Tibial artery (tissue), 4 donors: ENCODE measurements at regions of chr9 and their contacts with region 1.

Region 1: GRCh38 chr9:36337865-36338264 is 62.2 kb downstream of the RNF38 start:
- DNase-seq: no peak
- H3K4me3 ChIP-seq: no peak overlapping the region
- H3K27ac ChIP-seq: no peak overlapping the region
- H3K4me1 ChIP-seq: no peaks in the 10 kb centered on the region
- H3K27me3 ChIP-seq: no peaks in the 10 kb centered on the region
- CTCF ChIP-seq: no peak

Region 2: DNA sequence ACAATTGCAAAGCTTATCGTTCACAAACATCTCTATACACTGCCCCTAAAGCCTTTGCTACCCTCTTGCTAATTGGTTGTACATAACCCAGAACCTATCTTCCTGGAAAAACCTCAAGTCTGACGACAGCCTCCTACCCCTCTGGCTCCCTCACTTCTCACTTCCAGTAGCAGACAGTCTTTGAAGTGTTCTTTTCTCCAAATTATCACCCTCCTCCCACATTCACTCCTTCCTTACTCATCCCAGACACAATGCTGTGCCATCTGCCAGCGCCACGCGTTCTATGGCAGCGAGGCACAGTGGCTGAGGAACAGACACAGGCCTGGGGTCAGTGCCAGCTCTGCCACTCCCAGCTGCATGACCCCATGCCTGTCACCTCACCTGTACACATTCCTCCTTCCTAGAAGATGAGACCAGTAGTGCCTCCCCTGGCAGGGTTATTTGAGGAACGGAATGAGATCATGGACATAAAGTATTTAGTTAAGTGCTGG is 119.4 kb before region 1 on chr9:
- intact Hi-C with region 1: loop called (anchors 10 kb)
- DNase-seq: no peak
- H3K4me3 ChIP-seq: no peak overlapping the region
- H3K27ac ChIP-seq: no peak overlapping the region
- H3K4me1 ChIP-seq: peaks cover 0 to 20% (median 16%) of the 10 kb centered on the region in 4 donors
- H3K27me3 ChIP-seq: no peaks in the 10 kb centered on the region
- CTCF ChIP-seq: no peak